A673 (cell line): ENCODE measurements at regions of chr17 and their contacts with region 1.

Region 1: DNA sequence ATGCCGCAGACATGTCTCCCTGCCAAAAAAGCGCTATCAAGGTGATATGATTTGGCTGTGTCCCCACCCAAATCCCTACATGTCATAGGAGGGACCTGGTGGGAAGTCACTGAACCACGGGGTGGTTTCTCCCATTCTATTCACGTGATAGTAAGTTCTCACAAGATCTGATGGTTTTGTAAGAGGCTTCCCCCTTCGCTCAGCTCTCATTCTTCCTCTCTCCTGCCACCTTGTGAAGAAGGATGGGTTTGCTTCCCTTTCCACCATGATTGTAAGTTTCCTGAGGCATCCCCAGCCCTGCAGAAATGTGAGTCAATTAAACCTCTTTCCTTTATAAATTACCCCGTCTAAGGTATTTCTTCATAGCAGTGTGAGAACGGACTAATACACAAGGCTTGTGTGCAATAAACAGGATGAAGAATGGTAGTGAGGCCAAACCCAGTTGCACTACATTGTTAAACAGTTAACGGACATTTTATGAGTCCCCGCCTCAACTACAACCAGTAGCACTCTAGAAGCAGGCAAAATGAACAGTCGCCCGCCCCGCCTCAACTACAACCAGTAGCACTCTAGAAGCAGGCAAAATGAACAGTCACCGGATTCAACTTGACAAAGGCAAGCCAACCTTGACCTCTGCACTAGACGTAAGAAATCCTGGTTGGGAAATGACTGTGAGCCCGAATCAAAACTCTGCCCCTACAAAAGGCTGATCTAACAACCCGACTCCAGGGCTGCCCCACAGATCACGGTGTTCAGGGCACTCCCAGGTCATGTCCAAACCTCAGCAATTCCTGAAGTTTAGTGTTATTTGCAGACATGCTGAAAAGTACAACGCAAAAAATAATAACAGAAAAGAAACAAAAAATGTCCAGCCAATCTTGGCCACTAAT is 26.3 kb downstream of the VPS53 start:
- DNase-seq: peak; percentile 44
- H3K4me3 ChIP-seq: no peak overlapping the region
- H3K27ac ChIP-seq: no peak overlapping the region
- H3K4me1 ChIP-seq: no peaks in the 10 kb centered on the region
- H3K27me3 ChIP-seq: no peaks in the 10 kb centered on the region
- CTCF ChIP-seq: peak; percentile 42

Region 2: DNA sequence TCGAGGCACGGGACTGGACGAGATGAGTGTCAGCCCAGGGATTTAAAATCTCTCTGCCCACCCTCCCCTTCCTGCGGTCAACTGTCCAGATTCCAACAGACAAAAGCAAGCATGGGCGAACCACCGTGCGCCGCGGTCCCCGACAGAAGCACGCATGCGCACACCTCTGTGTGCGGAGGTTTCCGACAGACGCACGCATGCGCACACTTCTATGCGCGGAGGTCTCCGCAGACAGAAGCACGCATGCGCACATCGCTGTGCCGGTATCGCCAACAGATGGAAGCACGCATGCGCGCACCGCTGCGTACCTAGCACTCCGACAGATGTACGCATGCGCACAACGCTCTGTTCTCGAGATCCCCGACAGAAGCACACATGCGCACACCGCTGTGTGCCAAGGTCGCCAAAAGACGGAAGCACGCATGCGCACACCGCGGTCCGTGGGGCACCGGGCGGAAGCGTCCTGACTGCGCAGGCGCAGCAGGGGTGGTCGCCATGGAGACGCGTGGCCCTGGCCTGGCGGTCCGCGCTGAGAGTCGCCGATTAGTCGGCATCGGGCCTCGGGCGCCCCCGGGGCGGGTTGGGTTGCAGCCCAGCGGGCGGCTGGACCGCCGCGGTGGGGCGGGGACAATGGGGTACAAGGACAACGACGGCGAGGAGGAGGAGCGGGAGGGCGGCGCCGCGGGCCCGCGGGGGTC is 278.3 kb before region 1 on chr17:
- CTCF ChIA-PET with region 1: interaction called, 12 read pairs
- POLR2A ChIA-PET with region 1: no interaction called
- intact Hi-C with region 1: no loop called
- DNase-seq: peak; percentile 98
- H3K4me3 ChIP-seq: peak overlapping the region; percentile 84
- H3K27ac ChIP-seq: peak overlapping the region; percentile 93
- H3K4me1 ChIP-seq: peaks cover 16% of the 10 kb centered on the region
- H3K27me3 ChIP-seq: no peaks in the 10 kb centered on the region
- CTCF ChIP-seq: no peak

Region 3: DNA sequence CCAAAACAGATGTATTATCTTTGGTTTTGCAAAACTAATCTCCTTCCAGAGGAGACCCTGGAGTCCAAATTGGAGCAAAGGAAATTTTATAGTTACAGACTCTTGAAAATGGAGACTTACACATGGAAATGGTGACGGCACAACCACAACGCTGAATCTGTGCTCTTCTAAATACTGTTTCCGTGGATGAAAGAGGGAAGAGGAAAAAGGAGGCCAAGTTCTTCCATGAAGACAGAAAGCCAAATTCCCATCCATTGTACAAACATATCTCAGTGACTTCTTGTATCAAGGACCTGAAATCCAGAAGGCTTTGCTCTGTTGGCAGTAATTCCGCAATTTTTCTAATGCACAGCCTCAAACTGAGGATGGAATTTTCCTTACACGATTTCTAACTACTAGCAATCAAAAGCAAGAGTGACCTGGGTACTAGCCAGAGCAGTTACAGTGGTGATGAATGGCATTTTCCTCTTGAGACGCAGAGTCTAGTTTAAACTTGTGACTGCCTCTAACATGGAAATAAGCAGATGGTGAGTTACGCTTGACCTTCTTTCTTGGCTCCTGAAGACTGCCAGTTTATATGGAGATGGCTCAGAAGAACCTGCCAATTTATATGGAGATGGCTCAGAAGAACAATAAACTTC is 12.2 kb before region 1 on chr17:
- CTCF ChIA-PET with region 1: no interaction called
- POLR2A ChIA-PET with region 1: no interaction called
- intact Hi-C with region 1: no loop called
- DNase-seq: no peak
- H3K4me3 ChIP-seq: no peak overlapping the region
- H3K27ac ChIP-seq: no peak overlapping the region
- H3K4me1 ChIP-seq: no peaks in the 10 kb centered on the region
- H3K27me3 ChIP-seq: no peaks in the 10 kb centered on the region
- CTCF ChIP-seq: no peak